MCF 10A (cell line): ENCODE measurements at regions of chr14 and their contacts with region 1.

Region 1: DNA sequence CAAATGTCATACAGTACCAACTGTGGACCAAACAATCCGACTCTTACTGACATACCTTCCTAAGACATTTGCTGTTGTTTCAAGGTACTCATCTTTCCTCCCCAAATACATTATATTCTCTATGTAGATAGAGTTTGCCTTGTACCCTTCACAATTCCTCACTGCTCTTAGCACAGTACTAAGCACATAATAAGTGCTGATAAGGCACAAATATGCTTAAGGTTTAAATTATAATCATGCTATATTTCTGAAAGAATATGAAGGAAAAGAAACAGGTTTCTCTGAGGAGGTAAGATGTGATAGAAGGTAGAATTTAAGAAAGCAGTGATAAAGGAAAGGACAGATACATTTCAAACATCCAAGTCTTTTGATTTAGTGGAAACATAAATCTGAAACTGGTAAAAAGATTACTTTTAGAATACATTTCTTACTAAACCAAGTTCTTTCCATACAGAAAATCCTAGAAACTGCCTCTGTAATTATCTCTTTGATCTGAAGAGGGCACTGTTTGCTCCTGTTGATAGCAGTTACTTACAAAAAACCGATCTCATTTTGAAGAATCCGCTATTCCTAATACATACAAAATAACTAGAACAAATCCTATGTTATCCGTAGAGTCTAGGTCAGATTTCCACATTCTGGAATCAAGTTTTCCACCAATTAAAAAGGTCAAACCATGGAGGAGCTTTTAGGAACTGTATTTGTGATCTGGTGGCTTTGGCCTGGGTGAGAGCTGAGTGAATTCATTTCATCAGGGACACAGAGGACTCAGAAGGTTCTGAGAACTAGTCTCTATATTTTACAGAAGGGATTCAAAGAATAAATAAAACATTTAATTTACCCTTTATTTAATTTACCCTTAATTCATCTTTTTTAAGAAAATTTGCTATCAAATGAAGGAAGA is 311.9 kb downstream of the DAD1 start:
- DNase-seq: peak; percentile 34
- H3K4me3 Mint-ChIP-seq: no peak overlapping the region
- H3K27ac Mint-ChIP-seq: no peak overlapping the region
- H3K4me1 Mint-ChIP-seq: no peaks in the 10 kb centered on the region
- H3K27me3 Mint-ChIP-seq: peaks cover 48% of the 10 kb centered on the region
- CTCF ChIP-seq: peak; percentile 55

Region 2: DNA sequence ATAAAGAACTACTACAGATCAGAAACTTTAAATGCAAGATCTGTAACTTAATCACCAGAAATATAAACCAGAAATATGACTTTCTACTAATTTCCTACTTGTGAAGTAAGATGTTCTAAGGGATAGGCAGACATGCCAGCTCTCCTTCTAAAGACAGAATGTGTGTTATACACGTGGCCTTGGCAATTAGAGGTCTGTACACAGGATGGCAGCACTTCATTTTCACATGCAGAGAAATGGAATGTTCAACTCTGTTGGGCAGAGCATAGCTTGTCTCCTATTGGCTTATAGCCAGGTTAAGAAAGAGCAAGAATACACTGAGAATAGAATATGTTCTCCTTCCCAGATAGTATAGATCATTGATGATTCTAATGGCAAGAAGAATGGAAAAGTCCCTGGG is 92.0 kb before region 1 on chr14:
- CTCF ChIA-PET with region 1: no interaction called
- POLR2A ChIA-PET with region 1: no interaction called
- intact Hi-C with region 1: no loop called
- DNase-seq: peak; percentile 13
- H3K4me3 Mint-ChIP-seq: no peak overlapping the region
- H3K27ac Mint-ChIP-seq: no peak overlapping the region
- H3K4me1 Mint-ChIP-seq: no peaks in the 10 kb centered on the region
- H3K27me3 Mint-ChIP-seq: peaks cover 4% of the 10 kb centered on the region
- CTCF ChIP-seq: no peak

Region 3: GRCh38 chr14:22289559-22289958 is 12.4 kb after region 1 on chr14:
- CTCF ChIA-PET with region 1: interaction called, 39 read pairs
- POLR2A ChIA-PET with region 1: no interaction called
- intact Hi-C with region 1: no loop called
- DNase-seq: no peak
- H3K4me3 Mint-ChIP-seq: no peak overlapping the region
- H3K27ac Mint-ChIP-seq: peak overlapping the region; percentile 6
- H3K4me1 Mint-ChIP-seq: peaks cover 28% of the 10 kb centered on the region
- H3K27me3 Mint-ChIP-seq: no peaks in the 10 kb centered on the region
- CTCF ChIP-seq: no peak